ENCODE measurements at regions of chr1 and their contacts with region 1.

Region 1: GRCh38 chr1:24930204-24931145 is at the start of gene RUNX3:
- DNase-seq: peak; percentile 97
- H3K4me3 ChIP-seq: peak within 1 kb of the TSS; percentile 91
- H3K27ac ChIP-seq: peak within 1 kb of the TSS; percentile 72
- H3K4me1 ChIP-seq: peaks cover 70% of the 10 kb centered on the region
- CTCF ChIP-seq: peak; percentile 47
- total RNA-seq, gene RUNX3: 9.5 and 12.2 TPM in 2 replicates

Region 2: DNA sequence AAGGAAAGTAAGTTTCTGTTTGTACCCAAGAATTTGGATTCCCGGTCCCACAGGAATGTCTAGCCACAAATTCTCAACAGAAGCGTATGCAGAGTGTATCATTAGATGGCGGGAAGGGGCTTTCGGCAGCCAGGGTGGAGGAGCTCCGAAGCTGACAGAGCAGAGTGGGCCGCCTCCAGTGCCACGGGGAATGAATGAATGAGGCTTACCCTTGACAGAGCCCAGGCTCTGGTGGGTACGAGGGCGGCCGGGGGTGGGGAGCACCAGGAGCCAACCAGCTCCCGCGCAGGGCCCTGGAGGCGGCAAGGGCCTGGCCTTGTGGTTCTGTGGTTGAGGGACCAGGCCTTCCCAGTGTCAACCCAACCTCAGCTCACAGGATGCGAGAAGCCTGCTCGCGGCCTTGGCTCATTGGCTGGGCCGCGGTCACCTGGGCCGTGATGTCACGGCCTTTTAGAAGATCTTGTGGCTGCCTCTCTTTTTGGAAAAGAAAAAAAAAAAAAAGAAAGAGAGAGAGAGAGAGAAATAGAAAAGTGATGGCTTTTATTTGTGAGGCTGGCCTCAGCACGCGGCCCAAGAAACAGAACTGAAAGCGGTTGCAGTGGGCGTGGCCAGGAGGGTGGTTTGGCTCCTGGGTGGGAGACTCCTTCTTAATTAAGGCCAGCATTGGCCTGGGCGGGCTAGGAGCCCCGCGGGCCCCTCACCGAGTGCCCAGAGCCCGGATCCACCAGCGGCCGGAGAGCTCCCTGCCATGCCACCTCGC is 34.5 kb after region 1 on chr1:
- CTCF ChIA-PET with region 1: no interaction called
- POLR2A ChIA-PET with region 1: interaction called, 11 read pairs
- intact Hi-C with region 1: no loop called
- DNase-seq: peak; percentile 91
- H3K4me3 ChIP-seq: peak overlapping the region; percentile 61
- H3K27ac ChIP-seq: peak overlapping the region; percentile 76
- H3K4me1 ChIP-seq: peaks cover 42% of the 10 kb centered on the region
- CTCF ChIP-seq: no peak

Region 3: DNA sequence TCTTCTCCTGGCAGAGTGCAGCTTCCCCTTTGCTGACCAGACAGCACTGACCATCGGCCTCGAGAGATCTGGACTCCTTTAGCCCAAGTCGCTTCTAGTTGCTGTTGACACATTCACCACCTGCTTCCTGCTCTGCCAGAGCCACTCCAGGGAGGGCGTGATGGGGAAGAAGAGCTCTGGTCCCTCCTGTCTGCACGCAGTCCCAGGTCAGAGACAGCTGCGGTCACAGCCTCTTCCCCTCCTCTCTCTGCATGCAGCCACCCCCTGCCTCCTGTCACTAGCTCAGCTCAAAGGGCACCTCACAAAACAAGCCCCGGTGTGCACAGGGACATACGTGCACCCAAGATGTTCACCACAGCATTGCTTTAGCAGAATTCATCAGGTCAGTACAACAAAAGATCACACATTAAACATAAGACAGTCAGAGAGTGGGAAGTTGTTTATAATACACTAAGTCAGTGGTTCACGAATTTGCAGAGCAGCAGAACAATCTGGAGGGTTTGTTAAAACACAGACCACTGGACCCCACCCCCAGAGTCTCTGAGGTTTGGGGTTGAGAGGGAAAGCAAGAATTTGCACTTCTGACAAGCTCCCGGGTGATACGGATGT is 169.0 kb after region 1 on chr1:
- CTCF ChIA-PET with region 1: interaction called, 4 read pairs
- POLR2A ChIA-PET with region 1: interaction called, 3 read pairs
- intact Hi-C with region 1: loop called (anchors 2 kb)
- DNase-seq: peak; percentile 13
- H3K4me3 ChIP-seq: no peak overlapping the region
- H3K27ac ChIP-seq: no peak overlapping the region
- H3K4me1 ChIP-seq: peaks cover 20% of the 10 kb centered on the region
- CTCF ChIP-seq: no peak

Region 4: GRCh38 chr1:25204797-25205480 is 274.5 kb after region 1 on chr1:
- CTCF ChIA-PET with region 1: no interaction called
- POLR2A ChIA-PET with region 1: no interaction called
- intact Hi-C with region 1: loop called (anchors 1 kb)
- DNase-seq: peak; percentile 71
- H3K4me3 ChIP-seq: no peak overlapping the region
- H3K27ac ChIP-seq: no peak overlapping the region
- H3K4me1 ChIP-seq: no peaks in the 10 kb centered on the region
- CTCF ChIP-seq: peak; percentile 97